Activated CD4-positive, alpha-beta memory T cell treated with anti-CD3 and anti-CD28 coated beads for 36 hours (primary cell): ENCODE measurements at regions of chr18 and their contacts with region 1.

Region 1: DNA sequence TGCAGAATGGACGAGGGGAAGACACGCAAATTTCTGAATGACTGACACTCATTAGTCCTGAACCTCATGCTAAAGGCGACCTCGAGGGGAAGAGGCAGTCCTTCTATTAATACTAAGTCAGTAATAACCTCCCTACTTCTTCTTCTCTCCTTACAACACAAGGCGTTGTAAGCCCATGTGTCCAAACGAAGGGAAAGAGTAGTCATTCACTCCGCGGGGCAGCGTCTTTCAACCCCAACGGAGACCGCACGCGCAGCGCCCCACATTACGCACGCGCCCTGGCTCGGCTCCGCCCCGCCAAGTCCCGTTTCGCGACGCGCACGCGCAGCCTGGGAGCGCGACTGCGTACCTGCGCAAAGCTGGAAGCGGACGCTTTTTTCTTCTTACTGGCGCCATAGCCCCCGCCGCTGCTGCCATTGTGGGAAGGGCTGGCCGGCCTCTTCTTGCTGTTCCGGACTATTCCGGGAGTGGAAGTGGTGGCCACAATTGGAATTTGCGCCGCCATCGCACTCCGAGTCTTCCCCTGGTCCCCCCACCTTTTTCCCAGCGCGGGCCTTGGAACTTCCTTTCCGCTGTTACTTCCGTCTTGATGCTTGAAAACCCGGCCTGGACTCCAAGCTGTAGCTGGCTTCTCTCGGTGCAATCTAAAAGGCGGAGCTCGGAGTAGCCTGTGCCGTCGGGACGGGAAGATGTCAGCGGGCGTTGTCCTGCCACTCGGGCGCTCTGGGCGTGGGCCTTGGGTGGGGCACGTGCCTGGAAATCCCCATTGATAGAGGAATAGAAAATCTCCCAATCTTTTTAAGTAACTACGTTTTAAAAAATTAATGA is at the start of gene INO80C:
- DNase-seq: peak; percentile 95
- H3K4me3 Mint-ChIP-seq: peak within 1 kb of the TSS; percentile 95
- H3K27ac Mint-ChIP-seq: peak within 1 kb of the TSS; percentile 98
- H3K4me1 Mint-ChIP-seq: peaks cover 26% of the 10 kb centered on the region
- H3K27me3 Mint-ChIP-seq: no peaks in the 10 kb centered on the region
- total RNA-seq, gene INO80C: 25.3 to 28.5 TPM

Region 2: DNA sequence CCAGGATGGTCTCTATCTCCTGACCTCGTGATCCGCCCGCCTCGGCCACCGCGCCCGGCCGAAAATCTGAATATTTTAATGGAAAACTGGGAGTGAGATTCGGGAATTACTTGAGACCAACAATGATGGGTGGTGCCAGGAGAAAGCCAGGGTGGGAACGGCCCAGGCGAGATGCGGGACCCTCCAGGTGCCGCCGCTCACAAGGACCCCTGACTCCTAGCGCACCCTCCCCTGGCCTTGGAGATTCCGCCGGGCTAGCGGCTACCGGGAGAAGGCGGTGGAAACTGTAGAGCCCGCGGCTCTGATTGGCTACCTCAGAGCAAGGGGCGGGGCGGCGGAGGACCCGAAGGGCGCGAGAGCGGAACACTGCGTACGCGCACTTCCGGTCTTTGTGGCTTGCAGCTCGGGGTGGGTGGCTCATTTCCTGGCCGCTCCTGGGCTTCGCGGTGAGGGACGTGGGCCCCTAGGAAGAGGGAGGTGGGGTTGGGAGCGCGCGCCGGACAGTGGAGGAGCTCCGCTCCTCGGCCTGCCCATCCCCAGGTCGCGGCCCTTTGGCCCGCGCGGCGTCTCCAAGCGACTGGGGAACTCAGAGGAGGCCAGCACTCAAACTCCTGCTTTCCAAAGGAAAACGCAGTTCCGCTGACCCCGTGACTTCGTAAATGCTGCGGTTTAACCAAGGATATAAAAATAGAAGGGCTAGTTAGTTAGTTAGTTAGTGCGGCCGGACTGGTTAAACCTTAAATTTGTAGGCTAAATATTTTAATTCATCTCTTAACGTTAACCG is 256.7 kb before region 1 on chr18 and contains the start of gene ZNF397:
- CTCF ChIA-PET with region 1: no interaction called
- POLR2A ChIA-PET with region 1: interaction called, 4 read pairs
- intact Hi-C with region 1: loop called (anchors 5 kb)
- DNase-seq: peak; percentile 98
- H3K4me3 Mint-ChIP-seq: peak within 1 kb of the TSS; percentile 96
- H3K27ac Mint-ChIP-seq: peak within 1 kb of the TSS; percentile 98
- H3K4me1 Mint-ChIP-seq: peaks cover 26% of the 10 kb centered on the region
- H3K27me3 Mint-ChIP-seq: no peaks in the 10 kb centered on the region
- total RNA-seq, gene ZNF397: 19.2 to 19.6 TPM

Region 3: GRCh38 chr18:35407871-35408481 is 89.6 kb before region 1 on chr18:
- CTCF ChIA-PET with region 1: interaction called, 3 read pairs
- POLR2A ChIA-PET with region 1: no interaction called
- intact Hi-C with region 1: loop called (anchors 5 kb)
- DNase-seq: peak; percentile 27
- H3K4me3 Mint-ChIP-seq: no peak overlapping the region
- H3K27ac Mint-ChIP-seq: no peak overlapping the region
- H3K4me1 Mint-ChIP-seq: peaks cover 7% of the 10 kb centered on the region
- H3K27me3 Mint-ChIP-seq: peaks cover 5% of the 10 kb centered on the region

Region 4: DNA sequence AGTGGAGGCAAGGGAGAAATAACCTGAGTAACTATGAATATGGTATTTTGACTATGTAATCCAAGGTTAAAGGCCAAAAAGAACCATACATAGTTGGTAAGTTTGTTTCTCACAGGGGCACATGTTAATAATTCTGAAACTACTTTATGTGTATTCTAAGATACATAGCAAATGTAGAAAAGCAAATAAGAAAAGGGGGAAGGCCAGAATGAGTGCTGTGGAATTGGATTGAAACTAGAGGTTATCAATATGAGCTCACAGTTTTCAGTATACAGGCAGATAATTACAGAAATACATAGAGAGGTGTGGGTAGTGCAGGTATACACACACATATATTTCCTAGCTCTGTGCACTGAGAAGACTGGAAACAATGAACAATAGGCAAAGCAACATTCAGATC is 13.6 kb before region 1 on chr18:
- CTCF ChIA-PET with region 1: interaction called, 11 read pairs
- POLR2A ChIA-PET with region 1: interaction called, 16 read pairs
- intact Hi-C with region 1: loop called (anchors 1 kb)
- DNase-seq: no peak
- H3K4me3 Mint-ChIP-seq: no peak overlapping the region
- H3K27ac Mint-ChIP-seq: no peak overlapping the region
- H3K4me1 Mint-ChIP-seq: peaks cover 42% of the 10 kb centered on the region
- H3K27me3 Mint-ChIP-seq: no peaks in the 10 kb centered on the region

Region 5: GRCh38 chr18:35616664-35617423 is 119.3 kb after region 1 on chr18:
- CTCF ChIA-PET with region 1: no interaction called
- POLR2A ChIA-PET with region 1: interaction called, 3 read pairs
- intact Hi-C with region 1: loop called (anchors 1 kb)
- DNase-seq: peak; percentile 81
- H3K4me3 Mint-ChIP-seq: no peak overlapping the region
- H3K27ac Mint-ChIP-seq: no peak overlapping the region
- H3K4me1 Mint-ChIP-seq: peaks cover 7% of the 10 kb centered on the region
- H3K27me3 Mint-ChIP-seq: no peaks in the 10 kb centered on the region

Region 6: DNA sequence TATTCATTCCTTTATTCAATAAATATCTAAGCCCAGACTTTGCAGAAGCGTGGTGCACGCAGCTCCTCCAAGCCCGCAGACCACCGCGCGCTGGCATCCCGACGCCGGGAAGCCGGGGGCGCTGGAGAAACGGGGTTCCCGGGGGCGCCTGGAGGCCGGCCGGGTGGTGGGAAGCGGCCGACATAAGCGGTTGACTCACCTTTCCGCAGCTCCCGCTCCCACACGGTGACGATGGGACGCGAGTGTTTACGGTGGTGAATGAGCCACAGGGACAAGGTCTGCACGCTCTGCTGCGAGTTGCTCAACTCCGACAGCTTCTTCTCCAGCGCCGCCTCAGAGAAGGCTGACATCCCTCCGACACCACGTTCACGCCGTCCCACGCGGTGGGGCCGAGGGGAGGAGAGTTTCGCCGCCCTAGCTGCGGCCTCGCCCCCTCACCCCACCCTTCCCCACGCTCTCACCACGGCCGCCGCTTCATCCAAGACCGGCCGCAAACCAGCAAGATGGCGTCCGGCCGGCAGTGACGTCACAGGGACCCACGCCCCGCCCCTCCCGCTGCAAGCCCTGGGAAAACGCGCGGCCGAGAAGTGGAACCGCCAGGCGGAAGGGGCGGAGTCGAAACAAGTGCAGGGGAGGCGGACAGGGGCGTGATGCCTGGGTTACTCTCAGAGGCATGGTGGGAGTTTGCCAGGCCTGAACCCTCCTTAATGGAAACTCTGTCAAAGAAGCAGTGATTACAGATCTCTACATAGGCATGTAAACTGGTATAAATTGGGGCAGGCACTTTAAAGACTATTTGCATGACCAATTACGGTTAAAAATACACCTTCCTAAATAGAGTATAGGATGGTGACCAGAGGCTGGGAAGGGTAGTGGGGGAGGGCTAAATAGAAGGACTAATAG is 569.7 kb after region 1 on chr18 and contains the start of gene RPRD1A:
- CTCF ChIA-PET with region 1: no interaction called
- POLR2A ChIA-PET with region 1: no interaction called
- intact Hi-C with region 1: loop called (anchors 5 kb)
- DNase-seq: peak; percentile 98
- H3K4me3 Mint-ChIP-seq: peak within 1 kb of the TSS; percentile 92
- H3K27ac Mint-ChIP-seq: peak within 1 kb of the TSS; percentile 94
- H3K4me1 Mint-ChIP-seq: peaks cover 36% of the 10 kb centered on the region
- H3K27me3 Mint-ChIP-seq: no peaks in the 10 kb centered on the region
- total RNA-seq, gene RPRD1A: 25.9 to 29.6 TPM

Region 7: DNA sequence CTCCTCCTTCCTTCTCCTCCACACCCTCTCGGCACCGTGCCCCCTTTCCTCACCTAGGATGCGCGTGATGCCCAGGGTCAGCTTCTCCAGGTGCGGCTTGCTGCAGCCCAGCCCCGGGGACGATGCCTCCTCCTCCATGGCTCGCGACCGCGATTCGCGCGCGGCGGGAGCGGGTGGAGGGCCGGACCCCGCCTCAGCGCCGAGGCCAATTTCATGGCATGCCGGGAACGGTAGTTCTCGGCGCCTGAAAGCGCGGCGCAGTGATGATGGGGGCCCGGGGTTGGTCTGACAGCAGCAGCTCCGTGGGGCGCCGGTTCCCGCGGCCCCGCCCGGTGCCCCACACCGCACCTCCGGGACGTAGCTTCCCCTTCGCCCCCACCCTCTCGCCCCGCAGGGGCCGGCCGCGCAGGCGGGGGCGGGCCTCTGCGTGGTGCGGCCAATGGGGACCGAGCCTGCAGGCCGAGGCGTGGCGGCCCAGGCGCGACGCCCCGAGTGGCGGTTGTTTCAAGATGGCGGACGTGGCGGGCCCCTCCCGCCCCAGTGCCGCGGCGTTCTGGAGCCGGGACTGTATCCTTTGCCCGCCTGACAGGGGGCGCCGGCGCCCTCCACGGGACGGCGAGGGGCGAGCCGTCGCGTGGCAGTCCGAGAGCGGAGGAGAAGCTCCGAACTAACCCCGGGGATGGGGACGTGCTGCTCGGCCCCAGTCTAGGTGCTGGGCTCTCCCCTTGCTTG is 1331.2 kb after region 1 on chr18 and contains the starts of genes KIAA1328 and TPGS2:
- CTCF ChIA-PET with region 1: no interaction called
- POLR2A ChIA-PET with region 1: no interaction called
- intact Hi-C with region 1: loop called (anchors 10 kb)
- DNase-seq: peak; percentile 93
- H3K4me3 Mint-ChIP-seq: peak within 1 kb of the TSS; percentile 98
- H3K27ac Mint-ChIP-seq: peak within 1 kb of the TSS; percentile 91
- H3K4me1 Mint-ChIP-seq: peaks cover 38% of the 10 kb centered on the region
- H3K27me3 Mint-ChIP-seq: no peaks in the 10 kb centered on the region
- total RNA-seq, gene KIAA1328: 7.3 to 7.8 TPM
- total RNA-seq, gene TPGS2: 77.9 to 83.0 TPM